ENCODE measurements at regions of chr5 and their contacts with region 1.

Region 1: GRCh38 chr5:89011778-89012711 is 129.1 kb upstream of the MEF2C start:
- DNase-seq: no peak
- ATAC-seq: no peak
- H3K4me3 Mint-ChIP-seq: no peak overlapping the region
- H3K27ac Mint-ChIP-seq: no peak overlapping the region
- H3K4me1 Mint-ChIP-seq: no peaks in the 10 kb centered on the region
- H3K27me3 Mint-ChIP-seq: peaks cover 6% of the 10 kb centered on the region
- CTCF ChIP-seq: no peak

Region 2: GRCh38 chr5:88736494-88736893 is 275.6 kb before region 1 on chr5:
- CTCF ChIA-PET with region 1: no interaction called
- POLR2A ChIA-PET with region 1: no interaction called
- intact Hi-C with region 1: loop called (anchors 5 kb)
- DNase-seq: no peak
- ATAC-seq: no peak
- H3K4me3 Mint-ChIP-seq: no peak overlapping the region
- H3K27ac Mint-ChIP-seq: no peak overlapping the region
- H3K4me1 Mint-ChIP-seq: peaks cover 4% of the 10 kb centered on the region
- H3K27me3 Mint-ChIP-seq: peaks cover 10% of the 10 kb centered on the region
- CTCF ChIP-seq: no peak

Region 3: DNA sequence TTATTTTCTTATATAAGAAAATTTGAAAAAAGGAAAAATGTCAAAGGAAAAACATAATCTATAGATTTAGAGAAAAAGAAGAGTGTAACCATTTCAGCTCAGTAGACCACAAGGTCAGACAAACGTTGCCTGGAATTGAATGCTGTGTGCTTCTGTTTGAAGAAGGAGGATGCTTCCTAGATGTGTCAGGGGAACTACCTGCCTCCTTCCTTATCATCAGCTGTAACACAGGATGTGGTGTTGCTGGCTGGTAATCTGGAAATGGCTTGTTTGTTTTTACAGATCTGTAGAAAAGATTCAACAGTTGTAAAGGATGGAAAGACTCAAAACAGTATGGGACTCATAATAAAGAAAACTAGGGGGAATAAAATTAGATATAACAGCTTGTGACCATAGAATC is 31.6 kb after region 1 on chr5:
- CTCF ChIA-PET with region 1: no interaction called
- POLR2A ChIA-PET with region 1: no interaction called
- intact Hi-C with region 1: no loop called
- DNase-seq: no peak
- ATAC-seq: peak; percentile 34
- H3K4me3 Mint-ChIP-seq: no peak overlapping the region
- H3K27ac Mint-ChIP-seq: no peak overlapping the region
- H3K4me1 Mint-ChIP-seq: no peaks in the 10 kb centered on the region
- H3K27me3 Mint-ChIP-seq: no peaks in the 10 kb centered on the region
- CTCF ChIP-seq: no peak